ENCODE measurements at regions of chr7 and their contacts with region 1.

Region 1: GRCh38 chr7:120987683-120988590 is 574 bp upstream of the CPED1 start:
- DNase-seq: peak; percentile 88
- H3K4me3 Mint-ChIP-seq: peak overlapping the region; percentile 61
- H3K27ac Mint-ChIP-seq: no peak overlapping the region
- H3K4me1 Mint-ChIP-seq: peaks cover 17% of the 10 kb centered on the region
- H3K27me3 Mint-ChIP-seq: peaks cover 42% of the 10 kb centered on the region

Region 2: GRCh38 chr7:120805636-120806388 is 182.1 kb before region 1 on chr7:
- CTCF ChIA-PET with region 1: interaction called, 11 read pairs
- POLR2A ChIA-PET with region 1: no interaction called
- intact Hi-C with region 1: no loop called
- DNase-seq: peak; percentile 48
- H3K4me3 Mint-ChIP-seq: no peak overlapping the region
- H3K27ac Mint-ChIP-seq: no peak overlapping the region
- H3K4me1 Mint-ChIP-seq: no peaks in the 10 kb centered on the region
- H3K27me3 Mint-ChIP-seq: peaks cover 6% of the 10 kb centered on the region

Region 3: DNA sequence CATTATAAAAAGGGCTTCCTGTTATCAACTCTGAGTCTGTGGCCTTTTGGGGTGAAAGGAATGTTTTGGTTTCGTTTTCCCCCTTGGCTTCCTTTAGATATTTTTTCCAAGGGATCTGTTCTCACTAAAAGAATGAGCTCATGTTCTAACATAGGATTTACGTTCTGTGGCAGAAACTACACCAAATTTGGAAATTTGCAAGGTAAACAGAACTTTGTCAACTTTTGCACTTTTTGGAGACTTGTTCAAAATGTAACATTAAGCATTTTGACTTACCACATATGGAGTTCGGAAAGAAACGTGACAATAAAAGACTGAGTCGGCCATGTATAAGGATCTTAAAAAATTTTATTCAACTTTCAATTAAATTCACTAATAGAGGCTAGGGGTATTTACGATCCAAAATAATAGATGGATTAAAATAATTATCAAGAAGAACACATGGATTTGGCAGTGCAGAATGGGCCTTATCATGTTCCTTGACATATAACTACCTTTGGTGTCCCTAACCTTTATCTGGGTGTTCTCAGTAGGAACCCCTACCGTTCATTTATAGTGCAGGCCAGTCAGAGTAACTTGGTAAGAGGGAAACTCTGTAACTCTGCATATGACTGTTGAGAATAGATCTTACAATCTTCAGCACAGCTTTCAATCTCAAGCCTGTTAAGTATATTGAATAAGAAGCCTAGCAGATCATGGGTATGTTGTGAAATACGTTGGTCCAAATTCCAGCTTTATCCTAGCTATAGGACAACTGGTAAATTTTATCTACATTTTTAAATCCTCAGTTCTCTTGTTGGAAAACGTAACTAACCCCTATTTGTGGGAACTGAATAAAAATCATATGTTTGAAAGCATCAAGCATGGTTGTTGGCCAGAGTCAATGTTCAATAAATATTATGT is 12.4 kb after region 1 on chr7:
- CTCF ChIA-PET with region 1: interaction called, 20 read pairs
- POLR2A ChIA-PET with region 1: no interaction called
- intact Hi-C with region 1: no loop called
- DNase-seq: no peak
- H3K4me3 Mint-ChIP-seq: no peak overlapping the region
- H3K27ac Mint-ChIP-seq: no peak overlapping the region
- H3K4me1 Mint-ChIP-seq: peaks cover 15% of the 10 kb centered on the region
- H3K27me3 Mint-ChIP-seq: peaks cover 12% of the 10 kb centered on the region

Region 4: GRCh38 chr7:121081327-121081936 is 93.5 kb after region 1 on chr7:
- CTCF ChIA-PET with region 1: interaction called, 65 read pairs
- POLR2A ChIA-PET with region 1: no interaction called
- intact Hi-C with region 1: loop called (anchors 1 kb)
- DNase-seq: no peak
- H3K4me3 Mint-ChIP-seq: no peak overlapping the region
- H3K27ac Mint-ChIP-seq: no peak overlapping the region
- H3K4me1 Mint-ChIP-seq: no peaks in the 10 kb centered on the region
- H3K27me3 Mint-ChIP-seq: peaks cover 28% of the 10 kb centered on the region

Region 5: GRCh38 chr7:121329191-121330052 is 341.5 kb after region 1 on chr7:
- CTCF ChIA-PET with region 1: no interaction called
- POLR2A ChIA-PET with region 1: no interaction called
- intact Hi-C with region 1: loop called (anchors 10 kb)
- DNase-seq: peak; percentile 38
- H3K4me3 Mint-ChIP-seq: peak overlapping the region; percentile 4
- H3K27ac Mint-ChIP-seq: no peak overlapping the region
- H3K4me1 Mint-ChIP-seq: peaks cover 21% of the 10 kb centered on the region
- H3K27me3 Mint-ChIP-seq: peaks cover 46% of the 10 kb centered on the region